ENCODE measurements at regions of chr12 and their contacts with region 1.

Region 1: GRCh38 chr12:111599459-111600204 is 517 bp upstream of the ATXN2 start:
- DNase-seq: peak; percentile 80 to 97 (median 85)

Region 2: DNA sequence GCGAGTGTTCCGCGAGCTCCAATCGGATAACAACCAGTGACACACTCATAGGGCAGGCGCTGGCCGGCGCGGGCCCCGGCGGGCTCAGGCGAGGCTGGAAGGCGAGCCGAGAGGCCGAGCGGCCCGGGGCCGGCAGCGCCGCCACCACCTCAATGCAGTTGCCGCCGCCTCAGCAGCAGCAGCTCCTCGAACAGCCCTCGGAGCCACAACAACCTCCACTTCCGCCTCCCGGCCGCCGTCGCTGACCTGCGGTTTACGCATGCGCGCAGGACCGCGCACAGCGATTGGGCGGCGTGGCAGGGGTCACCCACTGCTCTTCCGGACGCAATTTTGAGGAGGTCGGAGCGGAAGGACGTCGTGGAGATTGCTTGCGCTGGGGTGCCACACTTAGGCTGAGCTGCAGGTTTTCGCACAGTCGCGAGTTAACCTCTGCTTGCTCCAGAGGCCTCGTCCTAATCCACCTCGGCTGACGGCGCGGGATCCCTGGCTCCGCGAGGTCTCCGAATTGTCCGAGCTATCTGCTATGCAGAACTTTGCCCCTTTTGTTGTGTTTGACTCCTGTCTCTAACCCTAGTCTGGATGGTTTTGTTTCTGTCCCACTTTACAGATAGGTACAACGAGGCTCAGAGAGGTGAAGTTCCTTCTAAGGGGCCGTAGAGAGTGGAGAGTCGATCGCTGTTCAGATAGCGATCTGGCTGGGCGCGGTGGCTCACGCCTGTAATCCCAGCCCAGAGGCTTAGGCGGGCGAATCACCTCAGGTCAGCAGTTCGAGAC is 86.3 kb after region 1 on chr12 and contains the starts of genes ACAD10 and BRAP:
- intact Hi-C with region 1: loop called (anchors 2 kb)
- DNase-seq: peak; percentile 87 to 98 (median 90)

Measured in posterior cingulate gyrus (tissue), 11 donors.